ENCODE measurements at regions of chr16 and their contacts with region 1.

Region 1: GRCh38 chr16:84617791-84618580 is at the start of gene COTL1:
- H3K4me3 ChIP-seq: peak within 1 kb of the TSS; percentile 47
- H3K27ac ChIP-seq: no peak within 1 kb of the TSS; the same call in 1 of the 2 replicates
- H3K4me1 ChIP-seq: peaks cover 4% of the 10 kb centered on the region; the same call in 1 of the 2 replicates
- CTCF ChIP-seq: no peak; the same call in 1 of the 2 replicates

Region 2: DNA sequence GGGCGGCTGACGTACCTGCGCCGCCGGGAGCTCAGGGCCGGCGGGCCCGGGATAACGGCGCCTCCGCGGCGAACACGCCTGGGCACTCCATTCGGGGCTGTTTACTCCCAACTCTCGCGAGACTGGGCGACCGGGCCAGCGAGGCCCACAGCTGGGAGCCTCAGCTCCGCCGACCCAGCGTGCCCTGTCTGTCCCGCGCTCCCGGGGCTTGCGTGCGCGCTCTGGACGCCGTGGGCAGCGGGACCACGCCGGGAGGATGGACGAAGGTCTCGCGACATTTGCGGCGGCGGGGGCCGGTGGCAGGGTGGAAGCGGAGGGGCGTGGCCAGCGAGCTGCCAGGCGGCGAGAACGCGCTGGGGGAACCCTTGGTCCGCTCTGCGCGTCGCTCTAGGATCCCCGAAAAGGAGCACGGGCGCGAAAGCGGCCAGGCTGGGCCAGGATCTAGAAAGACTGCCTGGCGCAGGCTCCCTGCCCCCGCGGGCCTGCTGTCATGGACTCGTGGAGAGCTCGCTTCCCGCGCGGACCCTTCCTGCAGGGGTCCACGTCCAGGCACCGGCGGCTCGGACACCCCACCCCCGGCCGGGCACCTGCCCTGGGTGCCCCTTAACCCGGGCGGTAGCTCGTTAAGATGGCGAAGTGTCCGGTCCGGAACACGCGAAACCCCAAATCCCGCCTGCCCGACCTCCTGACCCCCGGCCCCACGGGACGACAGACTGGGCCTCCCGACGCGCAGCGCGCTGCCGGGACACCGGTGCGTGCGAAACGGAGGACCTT is 501.1 kb before region 1 on chr16 and contains the start of gene MBTPS1:
- CTCF ChIA-PET with region 1: no interaction called
- POLR2A ChIA-PET with region 1: no interaction called
- H3K4me3 ChIP-seq: peak within 1 kb of the TSS; percentile 82
- H3K27ac ChIP-seq: peak within 1 kb of the TSS; percentile 79
- H3K4me1 ChIP-seq: no peaks in the 10 kb centered on the region
- CTCF ChIP-seq: peak; percentile 28; the same call in 1 of the 2 replicates

Region 3: GRCh38 chr16:84504420-84505248 is 113.4 kb before region 1 on chr16 and contains the start of gene MEAK7:
- CTCF ChIA-PET with region 1: interaction called, 137 read pairs
- POLR2A ChIA-PET with region 1: no interaction called
- H3K4me3 ChIP-seq: peak within 1 kb of the TSS; percentile 87
- H3K27ac ChIP-seq: peak within 1 kb of the TSS; percentile 42; the same call in 1 of the 2 replicates
- H3K4me1 ChIP-seq: peaks cover 10% of the 10 kb centered on the region
- CTCF ChIP-seq: peak; percentile 52

Region 4: GRCh38 chr16:84518748-84519341 is 99.1 kb before region 1 on chr16:
- CTCF ChIA-PET with region 1: interaction called, 137 read pairs
- POLR2A ChIA-PET with region 1: interaction called, 3 read pairs
- H3K4me3 ChIP-seq: no peak overlapping the region
- H3K27ac ChIP-seq: no peak overlapping the region
- H3K4me1 ChIP-seq: no peaks in the 10 kb centered on the region
- CTCF ChIP-seq: no peak

Region 5: GRCh38 chr16:84638195-84638806 is 20.3 kb after region 1 on chr16:
- CTCF ChIA-PET with region 1: interaction called, 15 read pairs
- POLR2A ChIA-PET with region 1: no interaction called
- H3K4me3 ChIP-seq: no peak overlapping the region
- H3K27ac ChIP-seq: no peak overlapping the region
- H3K4me1 ChIP-seq: no peaks in the 10 kb centered on the region
- CTCF ChIP-seq: no peak

Region 6: DNA sequence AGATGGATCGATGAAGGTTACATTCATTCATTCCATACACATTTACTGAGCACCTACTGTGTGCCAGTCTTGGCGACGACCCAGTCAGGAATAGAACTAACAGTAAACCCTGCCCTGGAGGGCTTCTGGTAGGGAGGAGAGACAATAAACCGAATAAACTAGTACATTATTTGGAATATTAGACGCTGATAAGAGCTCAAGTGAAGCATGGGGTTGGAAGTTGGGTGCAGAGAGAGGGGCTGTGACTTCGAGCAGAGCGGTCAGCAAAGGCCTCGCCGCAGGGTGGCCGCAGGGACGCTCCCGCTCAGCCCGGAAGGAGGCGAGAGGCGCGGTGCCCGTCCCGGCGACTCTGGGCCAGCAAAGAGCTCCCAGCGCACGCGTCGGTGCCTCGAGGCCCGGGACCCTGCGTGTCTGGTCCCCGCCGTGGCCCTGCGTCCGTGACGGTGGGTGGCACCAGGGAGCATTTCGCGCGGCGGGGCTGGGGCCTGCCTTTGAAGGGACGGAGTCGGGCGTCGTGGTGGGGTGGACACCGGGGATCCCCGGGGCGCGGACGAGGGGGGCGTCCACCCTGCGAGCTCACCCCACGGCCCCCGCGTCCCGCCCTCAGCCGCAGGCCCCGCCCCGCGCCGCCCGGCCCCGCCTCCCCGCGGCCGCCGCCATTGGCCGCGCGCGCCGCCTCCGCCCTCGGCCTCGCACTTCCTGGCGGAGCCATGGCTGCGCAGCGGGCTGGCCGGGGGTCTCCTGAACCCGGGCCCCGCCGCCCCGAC is 30.0 kb after region 1 on chr16 and contains the start of gene KLHL36:
- CTCF ChIA-PET with region 1: interaction called, 34 read pairs
- POLR2A ChIA-PET with region 1: no interaction called
- H3K4me3 ChIP-seq: peak within 1 kb of the TSS; percentile 56
- H3K27ac ChIP-seq: no peak within 1 kb of the TSS; the same call in 1 of the 2 replicates
- H3K4me1 ChIP-seq: no peaks in the 10 kb centered on the region
- CTCF ChIP-seq: peak; percentile 46

Region 7: DNA sequence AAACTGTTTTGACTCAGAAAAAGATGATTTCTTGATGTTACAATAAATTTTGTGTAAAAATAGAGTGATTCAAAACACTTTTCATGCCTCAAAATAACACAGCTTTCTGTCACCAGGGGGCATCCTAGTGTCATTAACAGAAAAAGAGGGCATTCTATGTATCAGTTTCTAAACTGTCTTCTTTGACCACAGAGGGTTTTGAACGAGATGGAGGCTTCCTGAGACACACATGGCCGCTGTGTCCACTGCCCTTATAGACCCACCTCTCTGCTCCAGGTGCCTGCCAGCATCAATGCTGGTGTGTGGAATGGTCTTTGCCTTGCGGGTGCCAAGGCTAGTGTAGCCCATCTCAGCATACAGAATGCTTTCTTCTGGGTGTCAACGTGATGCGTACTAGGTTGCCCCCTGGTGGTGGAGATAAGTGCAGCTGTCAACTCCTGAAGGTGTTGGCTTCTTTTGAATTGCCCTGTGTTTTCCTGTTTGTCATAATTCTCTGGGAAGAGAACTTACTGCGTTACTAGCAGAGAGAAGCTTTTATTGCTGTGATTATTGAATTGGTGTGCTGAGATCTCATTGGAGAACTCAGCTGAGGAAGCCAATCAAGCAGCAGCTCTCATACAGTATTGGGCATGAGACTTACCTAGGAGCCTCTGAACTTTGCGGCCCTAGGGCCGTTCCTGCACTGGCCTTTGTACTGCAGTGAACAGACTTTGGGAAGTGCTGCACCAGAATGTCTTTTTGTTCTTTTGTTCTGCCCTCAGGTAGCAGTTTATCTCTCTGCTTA is 120.5 kb after region 1 on chr16:
- CTCF ChIA-PET with region 1: interaction called, 52 read pairs
- POLR2A ChIA-PET with region 1: interaction called, 5 read pairs
- H3K4me3 ChIP-seq: no peak overlapping the region
- H3K27ac ChIP-seq: no peak overlapping the region
- H3K4me1 ChIP-seq: peaks cover 10% of the 10 kb centered on the region
- CTCF ChIP-seq: peak; percentile 73

Region 8: GRCh38 chr16:84970447-84971127 is 352.6 kb after region 1 on chr16:
- CTCF ChIA-PET with region 1: interaction called, 34 read pairs
- POLR2A ChIA-PET with region 1: no interaction called
- H3K4me3 ChIP-seq: no peak overlapping the region
- H3K27ac ChIP-seq: no peak overlapping the region
- H3K4me1 ChIP-seq: no peaks in the 10 kb centered on the region
- CTCF ChIP-seq: peak; percentile 94